ENCODE measurements at regions of chr1 and their contacts with region 1.

Region 1: GRCh38 chr1:31789259-31790065 is 25.3 kb upstream of the ADGRB2 start:
- DNase-seq: peak; percentile 81 to 89 (median 87)
- H3K4me3 ChIP-seq: peak overlapping the region; percentile 64 to 98 (median 67)
- H3K4me3 Mint-ChIP-seq: peak overlapping the region; percentile 94 to 95
- H3K27ac ChIP-seq: peak overlapping the region in 1 of 2 donors; percentile 99
- H3K27ac Mint-ChIP-seq: peak overlapping the region; percentile 23 to 100 (median 99)
- H3K4me1 ChIP-seq: peaks cover 8 to 18% of the 10 kb centered on the region in 2 donors
- H3K4me1 Mint-ChIP-seq: peaks cover 8% of the 10 kb centered on the region
- H3K27me3 ChIP-seq: no peaks in the 10 kb centered on the region
- H3K27me3 Mint-ChIP-seq: peaks cover 0 to 13% (median 2%) of the 10 kb centered on the region in 3 donors
- CTCF ChIP-seq: peak; percentile 77

Region 2: DNA sequence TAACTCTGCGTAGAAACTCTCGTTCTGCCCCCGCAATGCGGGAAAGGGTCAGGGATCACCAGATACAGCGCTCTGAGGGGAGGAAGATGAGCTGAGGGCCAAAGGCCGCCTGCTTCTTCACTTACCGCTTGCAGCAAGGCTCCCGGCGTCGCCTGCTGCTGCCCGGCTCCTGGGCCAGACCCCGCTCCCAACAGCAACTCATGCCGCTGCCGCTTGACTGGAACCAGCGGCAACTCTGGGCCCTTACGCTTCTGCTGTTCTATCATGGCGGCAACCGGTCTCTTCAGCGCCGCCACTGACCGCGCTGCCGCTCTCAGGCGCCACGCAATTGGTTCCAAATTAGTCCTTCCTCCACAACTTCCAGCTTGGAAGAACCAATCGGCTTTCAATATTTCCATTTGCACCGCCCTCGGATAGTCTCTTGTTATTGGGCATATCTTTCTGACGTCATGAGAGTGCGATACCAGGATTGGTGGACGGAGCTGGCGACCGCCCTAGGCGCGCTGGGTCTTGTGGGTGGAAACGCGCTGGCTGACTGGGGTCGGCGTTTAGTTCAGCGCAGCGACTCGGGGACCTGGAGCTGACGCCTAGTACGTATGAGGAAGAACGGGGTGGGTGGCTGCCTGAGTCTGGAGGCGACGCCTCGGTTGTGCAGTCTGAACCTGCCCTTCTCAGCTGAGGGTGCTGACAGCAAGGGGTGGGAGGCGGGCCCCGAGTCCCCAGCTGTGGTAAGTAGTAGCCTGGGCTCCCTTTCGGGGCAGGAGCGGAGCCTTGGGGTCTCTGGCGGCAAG is 492.8 kb before region 1 on chr1 and contains the starts of genes SNRNP40 and ZCCHC17:
- intact Hi-C with region 1: loop called in 1 of 2 experiments (anchors 10 kb)
- DNase-seq: peak; percentile 98 to 99 (median 98)
- H3K4me3 ChIP-seq: peak within 1 kb of the TSS; percentile 75 to 93 (median 87)
- H3K4me3 Mint-ChIP-seq: no peak within 1 kb of the TSS
- H3K27ac ChIP-seq: peak within 1 kb of the TSS; percentile 91 to 97
- H3K27ac Mint-ChIP-seq: peak within 1 kb of the TSS in 3 of 7 donors; percentile 10 to 47 (median 12)
- H3K4me1 ChIP-seq: peaks cover 23 to 30% of the 10 kb centered on the region in 2 donors
- H3K4me1 Mint-ChIP-seq: peaks cover 11% of the 10 kb centered on the region
- H3K27me3 ChIP-seq: no peaks in the 10 kb centered on the region
- H3K27me3 Mint-ChIP-seq: no peaks in the 10 kb centered on the region
- CTCF ChIP-seq: no peak
- polyA plus RNA-seq, gene SNRNP40: 25.6 to 56.4 (median 50.9) TPM
- polyA plus RNA-seq, gene ZCCHC17: 17.0 to 32.3 (median 29.3) TPM

Region 3: DNA sequence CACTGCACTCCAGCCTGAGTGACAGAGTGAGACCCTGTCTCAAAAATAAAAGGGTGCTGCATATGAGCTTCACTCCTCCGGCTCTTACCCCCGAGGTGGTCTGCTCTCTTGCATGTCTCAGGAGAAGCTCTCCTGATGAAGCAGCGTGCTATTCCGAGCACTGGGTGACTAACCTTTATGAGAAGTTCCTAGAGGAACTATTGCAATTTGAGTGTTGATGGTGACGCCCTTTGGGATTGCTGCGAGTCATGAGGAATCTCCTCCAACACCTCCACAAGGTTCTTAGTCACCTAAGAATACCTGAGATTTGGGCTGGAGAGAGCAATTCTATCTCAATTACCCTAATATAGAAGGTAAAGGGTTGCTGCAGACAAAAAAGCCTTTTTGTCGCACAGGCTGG is 253.9 kb before region 1 on chr1:
- intact Hi-C with region 1: no loop called
- DNase-seq: peak in 2 of 3 donors; percentile 56 to 77
- H3K4me3 ChIP-seq: peak overlapping the region; percentile 0 to 56 (median 17)
- H3K4me3 Mint-ChIP-seq: peak overlapping the region; percentile 72 to 87
- H3K27ac ChIP-seq: peak overlapping the region; percentile 85 to 86
- H3K27ac Mint-ChIP-seq: peak overlapping the region; percentile 83 to 98 (median 97)
- H3K4me1 ChIP-seq: peaks cover 21 to 23% of the 10 kb centered on the region in 2 donors
- H3K4me1 Mint-ChIP-seq: peaks cover 32% of the 10 kb centered on the region
- H3K27me3 ChIP-seq: no peaks in the 10 kb centered on the region
- H3K27me3 Mint-ChIP-seq: peaks cover 0 to 2% (median 0%) of the 10 kb centered on the region in 3 donors
- CTCF ChIP-seq: no peak

Region 4: GRCh38 chr1:31564134-31564989 is 225.1 kb before region 1 on chr1:
- intact Hi-C with region 1: loop called (anchors 2 to 10 kb)
- DNase-seq: peak; percentile 22 to 48 (median 44)
- H3K4me3 ChIP-seq: no peak overlapping the region
- H3K4me3 Mint-ChIP-seq: no peak overlapping the region
- H3K27ac ChIP-seq: no peak overlapping the region
- H3K27ac Mint-ChIP-seq: peak overlapping the region in 1 of 7 donors; percentile 49
- H3K4me1 ChIP-seq: no peaks in the 10 kb centered on the region
- H3K4me1 Mint-ChIP-seq: peaks cover 1% of the 10 kb centered on the region
- H3K27me3 ChIP-seq: no peaks in the 10 kb centered on the region
- H3K27me3 Mint-ChIP-seq: peaks cover 0 to 10% (median 4%) of the 10 kb centered on the region in 3 donors
- CTCF ChIP-seq: peak; percentile 87

Region 5: DNA sequence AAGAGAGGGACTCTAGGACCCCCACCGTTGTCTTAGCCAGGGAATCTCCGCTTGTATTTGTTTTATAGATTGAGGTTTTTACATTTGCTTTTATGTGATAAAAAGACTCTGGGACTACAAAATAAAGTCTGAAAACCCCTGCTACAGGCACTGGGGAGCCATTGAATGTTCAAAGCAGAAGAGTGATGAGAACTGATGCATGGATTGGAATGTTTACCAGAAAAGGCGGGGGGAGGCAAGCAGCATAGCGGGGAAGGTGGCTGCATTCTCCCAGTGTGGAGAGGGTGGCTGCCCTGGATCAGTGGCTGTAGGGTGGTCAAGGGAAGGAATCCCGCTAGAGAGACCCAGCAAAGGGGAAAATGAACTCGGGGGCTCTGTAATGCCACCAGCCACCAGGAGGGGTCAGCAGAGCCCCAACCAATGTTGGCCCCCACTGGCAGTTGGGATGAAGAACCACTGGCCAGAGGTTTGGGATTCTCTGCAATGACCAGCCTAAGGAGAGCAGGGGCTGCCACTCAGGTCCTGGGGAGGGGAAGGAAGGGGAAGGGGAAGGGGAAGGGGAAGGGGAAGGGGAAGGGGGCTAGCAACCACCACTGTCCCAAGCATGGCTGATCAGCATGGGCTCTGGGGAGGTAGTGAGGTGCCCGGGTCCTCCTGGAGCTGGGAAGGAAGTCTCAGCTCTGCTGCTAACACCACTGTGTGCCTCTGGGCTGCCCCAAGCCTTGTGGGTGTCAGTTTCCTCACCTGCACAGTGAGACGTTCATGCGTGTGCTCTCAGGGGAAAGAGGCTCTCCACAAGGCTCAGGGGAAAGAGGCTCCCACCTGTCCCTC is 125.6 kb before region 1 on chr1:
- intact Hi-C with region 1: loop called (anchors 1 to 2 kb)
- DNase-seq: peak; percentile 24 to 59 (median 51)
- H3K4me3 ChIP-seq: no peak overlapping the region
- H3K4me3 Mint-ChIP-seq: no peak overlapping the region
- H3K27ac ChIP-seq: no peak overlapping the region
- H3K27ac Mint-ChIP-seq: no peak overlapping the region
- H3K4me1 ChIP-seq: peaks cover 0 to 3% of the 10 kb centered on the region in 2 donors
- H3K4me1 Mint-ChIP-seq: peaks cover 2% of the 10 kb centered on the region
- H3K27me3 ChIP-seq: no peaks in the 10 kb centered on the region
- H3K27me3 Mint-ChIP-seq: peaks cover 2 to 7% (median 6%) of the 10 kb centered on the region in 3 donors
- CTCF ChIP-seq: peak; percentile 89

Region 6: DNA sequence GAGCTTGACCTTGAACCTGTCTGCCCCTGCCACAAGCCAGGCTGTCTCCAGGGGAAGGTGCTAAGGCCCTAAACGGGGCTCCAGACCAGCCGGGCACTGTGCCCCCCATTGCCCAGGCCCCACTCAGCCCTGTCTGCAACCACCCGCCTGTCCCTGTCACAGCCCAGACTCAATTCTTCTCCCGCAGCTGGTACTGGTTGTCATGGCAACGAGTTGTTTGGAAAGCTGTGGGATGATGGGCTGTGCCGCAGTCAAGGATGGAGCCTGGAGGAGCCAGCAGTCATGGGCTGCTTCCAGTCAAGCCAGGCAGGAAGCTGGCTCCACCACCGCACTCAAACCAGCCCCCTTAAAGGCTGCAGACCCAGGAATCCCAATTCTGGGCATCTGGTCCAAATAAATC is 22.1 kb after region 1 on chr1:
- intact Hi-C with region 1: no loop called
- DNase-seq: no peak
- H3K4me3 ChIP-seq: no peak overlapping the region
- H3K4me3 Mint-ChIP-seq: no peak overlapping the region
- H3K27ac ChIP-seq: no peak overlapping the region
- H3K27ac Mint-ChIP-seq: no peak overlapping the region
- H3K4me1 ChIP-seq: no peaks in the 10 kb centered on the region
- H3K4me1 Mint-ChIP-seq: peaks cover 11% of the 10 kb centered on the region
- H3K27me3 ChIP-seq: no peaks in the 10 kb centered on the region
- H3K27me3 Mint-ChIP-seq: peaks cover 9 to 16% (median 15%) of the 10 kb centered on the region in 3 donors
- CTCF ChIP-seq: no peak

Region 7: GRCh38 chr1:32014948-32015273 is 225.4 kb after region 1 on chr1:
- intact Hi-C with region 1: no loop called
- DNase-seq: no peak
- H3K4me3 ChIP-seq: peak overlapping the region; percentile 90 to 98 (median 91)
- H3K4me3 Mint-ChIP-seq: peak overlapping the region; percentile 98
- H3K27ac ChIP-seq: peak overlapping the region; percentile 84 to 91
- H3K27ac Mint-ChIP-seq: peak overlapping the region; percentile 89 to 95 (median 94)
- H3K4me1 ChIP-seq: peaks cover 34 to 44% of the 10 kb centered on the region in 2 donors
- H3K4me1 Mint-ChIP-seq: peaks cover 43% of the 10 kb centered on the region
- H3K27me3 ChIP-seq: no peaks in the 10 kb centered on the region
- H3K27me3 Mint-ChIP-seq: no peaks in the 10 kb centered on the region
- CTCF ChIP-seq: no peak

Measured in CD14-positive monocyte (primary cell).